ENCODE measurements at regions of chrX and their contacts with region 1.

Region 1: DNA sequence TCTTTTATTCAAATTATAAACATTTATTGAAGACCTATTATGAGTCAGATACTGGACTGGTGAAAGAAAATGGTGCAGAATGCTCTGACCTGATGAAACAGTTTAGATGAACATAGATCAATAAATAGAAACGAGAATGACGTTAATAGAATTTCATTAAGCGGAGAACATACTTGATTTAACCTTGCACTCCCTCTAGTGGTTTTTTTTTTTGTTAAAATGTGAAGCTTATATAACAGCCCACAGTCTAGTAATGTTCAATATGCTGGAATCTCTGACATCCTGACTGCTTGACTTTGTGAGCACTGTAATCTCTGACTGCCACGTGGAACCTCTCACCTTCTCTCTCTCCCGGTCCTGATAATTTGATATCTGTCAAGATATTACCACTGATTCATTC is 32.3 kb downstream of the HDAC8 start:
- DNase-seq: no peak
- H3K4me3 ChIP-seq: no peak overlapping the region
- H3K27ac ChIP-seq: no peak overlapping the region
- H3K4me1 ChIP-seq: no peaks in the 10 kb centered on the region
- H3K27me3 ChIP-seq: no peaks in the 10 kb centered on the region
- CTCF ChIP-seq: peak in 5 of 6 experiments; percentile 9 to 51 (median 44)
- POLR2A ChIP-seq: no peak

Region 2: DNA sequence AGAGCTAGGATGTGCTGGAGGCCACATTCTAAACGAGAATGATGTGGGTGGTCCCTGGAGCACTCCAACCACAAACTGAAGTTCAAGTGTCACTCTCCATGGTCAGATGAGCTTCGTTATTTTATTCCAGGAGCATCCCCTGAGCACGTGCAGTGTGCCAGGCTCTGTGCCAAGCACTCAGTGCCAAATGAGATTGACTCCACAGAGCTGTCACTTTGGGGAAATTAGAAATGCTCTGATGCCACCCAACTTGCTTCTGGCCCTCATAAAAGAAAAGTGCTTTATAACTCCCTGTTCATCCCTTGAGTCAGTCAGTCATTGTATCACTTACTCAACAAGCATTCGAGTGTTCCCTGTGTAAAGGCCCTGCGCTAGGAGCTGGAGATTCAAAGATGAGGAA is 499.8 kb before region 1 on chrX:
- intact Hi-C with region 1: no loop called
- DNase-seq: no peak
- H3K4me3 ChIP-seq: no peak overlapping the region
- H3K27ac ChIP-seq: no peak overlapping the region
- H3K4me1 ChIP-seq: peaks cover 0 to 3% of the 10 kb centered on the region in 2 donors
- H3K27me3 ChIP-seq: peaks cover 13% of the 10 kb centered on the region
- CTCF ChIP-seq: no peak
- POLR2A ChIP-seq: no peak

Region 3: DNA sequence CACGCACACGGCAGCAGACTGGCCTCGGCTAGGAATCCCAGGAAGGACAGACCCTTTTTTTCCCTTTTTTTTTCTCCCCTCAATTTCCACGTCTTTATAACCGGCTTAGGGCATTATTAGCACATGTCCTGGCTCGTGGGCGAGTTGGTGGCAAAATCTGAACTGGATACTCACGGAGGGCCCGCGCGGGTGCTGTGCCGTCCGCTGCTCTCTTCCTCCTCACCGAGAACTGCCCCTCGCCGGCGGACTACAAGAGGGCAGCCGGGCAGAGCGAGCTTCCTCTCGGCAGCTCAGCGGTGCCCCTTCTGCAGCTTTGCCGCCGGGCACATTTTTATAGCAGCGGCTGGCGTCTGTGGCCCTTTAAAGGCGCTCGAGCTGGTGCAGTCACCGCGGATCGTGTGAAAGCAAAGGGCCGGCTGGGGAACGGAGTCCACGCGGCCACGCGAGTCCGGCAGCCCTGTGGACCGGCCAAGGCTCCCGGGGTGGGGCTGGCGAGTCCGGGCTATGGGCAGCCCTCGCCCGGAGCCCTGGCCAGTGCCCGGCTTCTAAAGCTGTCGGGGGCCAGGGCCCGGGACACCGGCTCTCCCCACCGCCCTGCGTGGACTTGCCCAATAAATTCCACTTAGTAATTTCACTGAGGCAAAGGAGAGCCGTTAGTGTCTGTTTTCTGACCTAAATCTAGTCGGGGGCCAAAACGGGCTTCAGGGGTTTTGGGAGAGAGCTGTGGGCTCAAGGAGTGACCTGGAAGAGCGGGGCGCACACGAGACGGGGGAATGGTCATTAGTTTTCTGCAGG is 233.3 kb before region 1 on chrX:
- intact Hi-C with region 1: loop called in 1 of 2 experiments (anchors 10 kb)
- DNase-seq: peak; percentile 47 to 75 (median 60)
- H3K4me3 ChIP-seq: peak overlapping the region in 2 of 4 donors; percentile 34 to 59
- H3K27ac ChIP-seq: no peak overlapping the region
- H3K4me1 ChIP-seq: peaks cover 14 to 21% of the 10 kb centered on the region in 2 donors
- H3K27me3 ChIP-seq: peaks cover 69% of the 10 kb centered on the region
- CTCF ChIP-seq: no peak
- POLR2A ChIP-seq: peak in 1 of 2 donors; percentile 25

Region 4: GRCh38 chrX:72554448-72555140 is 14.3 kb after region 1 on chrX:
- intact Hi-C with region 1: no loop called
- DNase-seq: no peak
- H3K4me3 ChIP-seq: no peak overlapping the region
- H3K27ac ChIP-seq: no peak overlapping the region
- H3K4me1 ChIP-seq: no peaks in the 10 kb centered on the region
- H3K27me3 ChIP-seq: peaks cover 8% of the 10 kb centered on the region
- CTCF ChIP-seq: no peak
- POLR2A ChIP-seq: no peak